ENCODE measurements at regions of chr1 and their contacts with region 1.

Region 1: GRCh38 chr1:156838981-156839410 is 19.9 kb downstream of the INSRR start:
- DNase-seq: no peak
- ATAC-seq: peak in 3 of 4 donors; percentile 26 to 48 (median 45)
- H3K4me3 ChIP-seq: no peak overlapping the region
- H3K27ac ChIP-seq: no peak overlapping the region
- H3K4me1 ChIP-seq: no peaks in the 10 kb centered on the region
- H3K27me3 ChIP-seq: peaks cover 0 to 50% (median 10%) of the 10 kb centered on the region in 9 donors
- CTCF ChIP-seq: peak; percentile 77 to 90 (median 82)
- POLR2A ChIP-seq: no peak

Region 2: DNA sequence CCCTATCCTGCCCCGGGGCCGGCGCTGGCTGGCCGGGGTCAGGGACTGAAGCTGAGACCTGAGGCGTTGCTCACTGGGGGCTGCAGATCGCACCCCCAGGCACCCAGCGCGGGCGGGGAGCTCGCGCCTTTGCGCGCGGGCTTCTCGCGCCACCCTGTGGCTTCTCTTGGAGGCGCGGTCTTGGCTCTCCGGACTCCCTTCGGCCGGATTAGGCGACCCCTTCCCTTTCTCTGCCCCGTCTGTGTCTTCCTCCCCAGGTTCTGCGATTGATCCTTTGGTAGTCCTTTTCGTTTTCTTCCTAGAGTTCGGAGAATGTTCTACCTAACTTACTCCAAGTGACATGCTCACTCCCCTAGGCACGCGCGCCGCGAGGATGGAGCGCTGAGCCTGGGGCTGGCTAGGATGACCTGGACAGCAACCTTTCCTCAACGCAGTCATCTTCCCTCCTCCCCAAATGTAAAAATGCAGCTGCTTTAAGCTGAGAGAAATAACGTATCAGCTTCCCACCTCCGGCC is 21.2 kb after region 1 on chr1:
- intact Hi-C with region 1: loop called in 4 of 10 experiments (anchors 2 kb)
- DNase-seq: peak in 3 of 5 donors; percentile 30 to 59 (median 41)
- ATAC-seq: peak; percentile 28 to 80 (median 60)
- H3K4me3 ChIP-seq: peak overlapping the region; percentile 16 to 56 (median 40)
- H3K27ac ChIP-seq: no peak overlapping the region
- H3K4me1 ChIP-seq: peaks cover 12 to 37% (median 29%) of the 10 kb centered on the region in 12 donors
- H3K27me3 ChIP-seq: peaks cover 6 to 63% (median 34%) of the 10 kb centered on the region in 9 donors
- CTCF ChIP-seq: peak; percentile 70 to 93 (median 82)
- POLR2A ChIP-seq: no peak

Region 3: GRCh38 chr1:156892190-156893047 is 53.4 kb after region 1 on chr1:
- intact Hi-C with region 1: loop called in 9 of 10 experiments (anchors 1 to 10 kb)
- DNase-seq: peak; percentile 94 to 96 (median 94)
- ATAC-seq: peak; percentile 80 to 90 (median 86)
- H3K4me3 ChIP-seq: peak overlapping the region in 10 of 12 donors; percentile 18 to 91 (median 72)
- H3K27ac ChIP-seq: peak overlapping the region; percentile 80 to 99 (median 93)
- H3K4me1 ChIP-seq: peaks cover 0 to 55% (median 38%) of the 10 kb centered on the region in 12 donors
- H3K27me3 ChIP-seq: peaks cover 0 to 28% (median 4%) of the 10 kb centered on the region in 9 donors
- CTCF ChIP-seq: peak; percentile 81 to 97 (median 88)
- POLR2A ChIP-seq: no peak

Region 4: DNA sequence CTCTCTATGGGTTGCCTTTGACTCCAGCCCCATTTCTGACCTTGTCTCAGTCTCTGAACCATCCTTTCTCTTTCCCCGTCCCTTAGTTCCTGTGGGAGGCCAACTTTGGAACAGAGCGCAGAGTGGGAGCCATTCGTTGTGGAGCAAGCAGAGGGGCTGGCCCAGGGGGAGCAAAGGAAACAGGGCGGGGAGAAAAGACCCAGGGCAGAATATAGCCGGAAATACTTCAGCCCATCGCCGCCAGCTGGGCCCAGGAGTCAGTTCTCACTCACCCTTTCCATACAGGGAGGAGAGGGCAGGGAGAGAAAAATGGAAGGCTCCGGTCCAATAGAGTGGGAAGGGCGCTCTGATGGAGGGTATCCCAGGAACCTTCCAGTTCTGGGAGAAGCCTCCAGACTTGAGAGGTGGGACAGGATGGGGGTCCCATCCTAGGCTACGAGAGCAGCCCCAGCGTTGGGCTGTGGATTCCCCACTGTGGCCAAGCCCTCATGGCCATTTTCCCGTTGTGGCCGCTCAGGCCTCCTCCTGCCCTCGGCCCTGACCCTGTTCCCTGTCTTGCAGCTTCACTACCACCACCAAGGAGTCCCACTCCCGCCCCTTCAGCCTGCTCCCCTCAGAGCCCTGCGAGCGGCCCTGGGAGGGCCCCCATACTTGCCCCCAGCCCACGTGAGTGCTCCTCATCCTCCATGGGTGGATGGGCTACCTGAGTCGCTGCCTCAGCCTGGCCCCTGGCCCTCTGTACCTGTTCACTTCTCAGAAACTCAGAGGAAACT is 65.4 kb after region 1 on chr1:
- intact Hi-C with region 1: no loop called
- DNase-seq: peak in 2 of 5 donors; percentile 44 to 46
- ATAC-seq: peak in 2 of 4 donors; percentile 12 to 50
- H3K4me3 ChIP-seq: no peak overlapping the region
- H3K27ac ChIP-seq: peak overlapping the region in 6 of 12 donors; percentile 20 to 57 (median 29)
- H3K4me1 ChIP-seq: peaks cover 1 to 86% (median 51%) of the 10 kb centered on the region in 12 donors
- H3K27me3 ChIP-seq: peaks cover 0 to 19% (median 0%) of the 10 kb centered on the region in 9 donors
- CTCF ChIP-seq: no peak
- POLR2A ChIP-seq: no peak

Region 5: DNA sequence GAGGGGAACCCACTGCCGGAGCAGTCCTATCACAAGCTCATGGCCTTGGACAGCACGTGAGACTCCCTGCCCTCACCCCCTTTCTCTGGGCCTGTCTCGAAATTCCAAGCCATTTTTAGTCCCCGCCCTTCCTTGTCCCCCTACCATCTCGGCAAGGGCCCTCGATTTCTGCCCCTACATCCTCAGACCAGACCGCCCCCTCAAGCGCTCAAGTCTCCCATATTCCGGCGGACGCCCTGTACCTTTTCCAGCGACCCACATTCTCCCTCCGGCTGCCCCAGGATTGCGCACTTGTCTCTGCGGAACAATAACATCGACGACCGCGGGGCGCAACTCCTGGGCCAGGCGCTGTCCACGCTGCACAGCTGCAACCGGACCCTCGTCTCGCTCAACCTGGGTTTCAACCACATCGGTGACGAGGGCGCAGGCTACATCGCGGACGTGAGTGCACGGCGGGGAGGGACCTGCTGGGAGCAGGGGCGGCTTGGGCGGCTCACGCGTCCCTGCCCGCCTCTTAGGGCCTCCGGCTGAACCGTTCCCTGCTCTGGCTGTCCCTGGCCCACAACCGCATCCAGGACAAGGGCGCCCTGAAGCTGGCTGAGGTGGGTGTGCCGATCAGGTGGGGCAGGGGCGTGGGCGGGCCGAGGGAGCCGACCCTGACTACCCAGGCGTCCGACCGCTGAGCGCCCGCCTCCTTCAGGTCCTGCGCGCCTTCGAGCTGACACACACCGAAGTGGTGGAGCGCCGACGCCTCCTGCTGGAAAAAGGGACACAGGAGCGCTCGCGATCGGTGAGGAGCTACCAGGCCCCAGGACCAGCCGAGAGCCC is 88.4 kb after region 1 on chr1:
- intact Hi-C with region 1: loop called in 4 of 10 experiments (anchors 5 to 10 kb)
- DNase-seq: peak; percentile 65 to 88 (median 68)
- ATAC-seq: peak; percentile 35 to 71 (median 55)
- H3K4me3 ChIP-seq: peak overlapping the region in 10 of 12 donors; percentile 27 to 41 (median 31)
- H3K27ac ChIP-seq: no peak overlapping the region
- H3K4me1 ChIP-seq: peaks cover 4 to 42% (median 19%) of the 10 kb centered on the region in 12 donors
- H3K27me3 ChIP-seq: peaks cover 24 to 69% (median 53%) of the 10 kb centered on the region in 9 donors
- CTCF ChIP-seq: peak; percentile 40 to 77 (median 64)
- POLR2A ChIP-seq: no peak